ENCODE measurements at regions of chr1 and their contacts with region 1.

Region 1: DNA sequence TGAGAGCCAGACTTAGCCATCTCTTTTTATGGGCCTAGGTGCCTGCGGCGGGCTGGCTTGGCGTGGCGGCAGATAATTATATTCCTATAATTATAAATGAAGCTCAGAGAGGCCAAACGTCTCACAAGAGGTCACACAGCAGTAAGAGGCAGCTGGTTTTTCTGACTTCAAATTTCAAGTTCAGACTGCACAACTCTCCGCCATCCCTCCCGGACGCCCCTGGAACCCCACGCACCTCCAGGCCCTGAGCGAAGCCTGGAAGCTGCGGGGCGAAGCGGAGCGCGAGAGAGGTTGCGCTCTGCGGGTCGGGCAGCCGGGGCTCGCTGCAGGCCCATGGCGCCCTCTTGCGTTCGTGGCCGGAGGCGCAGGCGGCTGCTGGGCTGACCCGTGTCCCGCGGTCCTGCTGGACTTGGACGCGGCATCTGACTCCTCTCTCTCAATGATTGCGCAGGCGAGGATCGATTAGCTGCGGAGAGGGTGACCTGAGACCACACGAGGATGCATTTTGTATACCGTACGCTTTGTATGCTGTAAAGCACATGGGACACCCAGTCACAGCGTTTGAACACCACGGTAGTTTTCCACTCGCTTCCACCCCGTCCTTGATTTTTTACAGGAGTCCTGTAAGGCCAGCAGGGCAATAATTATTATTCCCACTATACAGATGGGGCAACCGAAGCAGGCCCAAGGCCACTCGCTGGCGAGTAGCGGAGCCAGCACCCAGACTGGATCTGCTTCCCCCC is 272.7 kb downstream of the FOXD2 start:
- DNase-seq: peak; percentile 64 to 88 (median 75)
- ATAC-seq: peak; percentile 79 to 93 (median 87)
- H3K4me3 ChIP-seq: peak overlapping the region in 10 of 12 donors; percentile 27 to 56 (median 46)
- H3K27ac ChIP-seq: no peak overlapping the region
- H3K4me1 ChIP-seq: peaks cover 7 to 32% (median 22%) of the 10 kb centered on the region in 12 donors
- H3K27me3 ChIP-seq: peaks cover 19 to 97% (median 74%) of the 10 kb centered on the region in 9 donors
- CTCF ChIP-seq: peak; percentile 96 to 100 (median 99)
- POLR2A ChIP-seq: no peak

Region 2: DNA sequence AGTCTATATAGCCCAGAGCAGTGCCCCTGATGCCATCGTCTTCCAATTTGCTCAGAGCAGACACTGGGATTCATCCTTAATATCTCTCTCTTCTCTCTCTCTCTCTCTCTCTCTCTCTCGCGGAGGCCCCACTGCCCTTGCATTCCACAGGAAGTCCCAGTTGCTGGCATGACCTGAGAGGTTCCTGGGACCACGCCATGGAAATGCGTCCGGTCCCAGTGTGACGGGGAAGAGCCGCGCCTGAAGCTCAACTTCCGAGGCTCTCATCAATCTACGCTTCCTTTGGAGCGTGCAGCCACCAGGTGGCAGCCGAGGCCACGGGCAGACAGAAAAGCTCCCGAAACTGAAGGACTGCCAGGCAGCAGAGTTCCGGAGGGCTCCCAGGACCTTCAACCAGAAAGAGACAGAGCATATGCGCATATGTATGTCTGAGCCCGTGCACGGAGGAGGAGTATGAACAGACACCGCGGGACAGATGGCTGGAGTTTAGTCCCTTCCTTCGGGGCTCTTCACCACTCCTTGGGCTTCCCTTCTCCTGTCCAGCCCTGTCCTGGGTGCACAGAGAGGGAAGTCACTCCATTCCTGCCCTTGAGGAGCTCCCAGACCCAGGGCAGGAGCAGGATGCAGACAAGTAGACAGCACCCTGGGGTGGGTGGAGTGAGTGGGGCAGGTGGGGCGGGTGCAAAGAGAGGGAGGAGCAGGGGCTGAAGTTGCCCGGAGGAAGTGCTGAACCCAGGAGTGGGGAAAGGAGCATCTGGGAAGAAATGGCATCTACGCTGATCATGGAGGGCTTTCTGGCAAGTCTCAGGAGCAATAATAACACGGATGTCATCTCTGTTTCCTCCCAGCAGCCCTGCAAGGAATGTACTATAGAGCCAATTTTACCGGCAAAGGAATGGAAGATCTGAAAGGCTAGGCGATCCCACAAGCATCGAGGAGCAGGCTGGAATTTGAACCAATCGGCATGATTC is 531.2 kb before region 1 on chr1:
- intact Hi-C with region 1: loop called in 5 of 10 experiments (anchors 5 to 10 kb)
- DNase-seq: peak; percentile 85 to 94 (median 92)
- ATAC-seq: peak; percentile 83 to 94 (median 92)
- H3K4me3 ChIP-seq: peak overlapping the region; percentile 6 to 61 (median 45)
- H3K27ac ChIP-seq: no peak overlapping the region
- H3K4me1 ChIP-seq: peaks cover 3 to 16% (median 10%) of the 10 kb centered on the region in 12 donors
- H3K27me3 ChIP-seq: peaks cover 0 to 22% (median 5%) of the 10 kb centered on the region in 9 donors
- CTCF ChIP-seq: peak; percentile 85 to 96 (median 91)
- POLR2A ChIP-seq: peak in 1 of 2 donors; percentile 15

Region 3: GRCh38 chr1:47302472-47302871 is 408.0 kb before region 1 on chr1:
- intact Hi-C with region 1: no loop called
- DNase-seq: no peak
- ATAC-seq: no peak
- H3K4me3 ChIP-seq: no peak overlapping the region
- H3K27ac ChIP-seq: no peak overlapping the region
- H3K4me1 ChIP-seq: peaks cover 0 to 17% (median 8%) of the 10 kb centered on the region in 12 donors
- H3K27me3 ChIP-seq: no peaks in the 10 kb centered on the region
- CTCF ChIP-seq: no peak
- POLR2A ChIP-seq: no peak

Region 4: DNA sequence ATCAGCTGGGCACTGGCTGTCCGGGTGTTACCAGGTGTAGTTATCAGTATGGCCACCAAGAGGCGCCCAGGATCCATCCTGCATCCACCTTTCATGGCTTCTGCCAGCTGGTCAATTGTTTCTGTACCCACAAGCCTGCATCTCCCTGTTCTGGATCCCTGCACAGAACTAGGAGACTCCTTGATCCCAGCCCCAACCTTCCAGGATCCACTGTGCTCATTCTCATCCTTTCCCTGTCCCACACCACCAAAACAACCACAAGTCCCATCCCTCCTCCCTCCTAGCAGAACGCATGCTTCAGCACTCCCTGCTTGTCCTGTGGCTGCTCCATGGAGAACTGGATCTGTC is 321.6 kb before region 1 on chr1:
- intact Hi-C with region 1: loop called in 3 of 10 experiments (anchors 5 kb)
- DNase-seq: peak in 4 of 5 donors; percentile 30 to 60 (median 41)
- ATAC-seq: peak; percentile 21 to 77 (median 70)
- H3K4me3 ChIP-seq: no peak overlapping the region
- H3K27ac ChIP-seq: no peak overlapping the region
- H3K4me1 ChIP-seq: peaks cover 0 to 10% (median 0%) of the 10 kb centered on the region in 12 donors
- H3K27me3 ChIP-seq: peaks cover 0 to 11% (median 0%) of the 10 kb centered on the region in 9 donors
- CTCF ChIP-seq: peak; percentile 50 to 70 (median 62)
- POLR2A ChIP-seq: no peak

Region 5: GRCh38 chr1:47437447-47438164 is 272.9 kb before region 1 on chr1 and contains the start of gene FOXD2:
- intact Hi-C with region 1: loop called (anchors 1 to 5 kb)
- DNase-seq: peak; percentile 83 to 93 (median 85)
- ATAC-seq: peak; percentile 92 to 95 (median 95)
- H3K4me3 ChIP-seq: peak within 1 kb of the TSS; percentile 36 to 81 (median 70)
- H3K27ac ChIP-seq: peak within 1 kb of the TSS in 11 of 12 donors; percentile 49 to 90 (median 69)
- H3K4me1 ChIP-seq: peaks cover 4 to 56% (median 25%) of the 10 kb centered on the region in 12 donors
- H3K27me3 ChIP-seq: peaks cover 43 to 98% (median 84%) of the 10 kb centered on the region in 9 donors
- CTCF ChIP-seq: peak; percentile 92 to 100 (median 98)
- POLR2A ChIP-seq: peak in 1 of 2 donors; percentile 62
- total RNA-seq, gene FOXD2: 0.05 to 0.14 (median 0.12) TPM in 5 of 9 donors, not detected in the others

Region 6: DNA sequence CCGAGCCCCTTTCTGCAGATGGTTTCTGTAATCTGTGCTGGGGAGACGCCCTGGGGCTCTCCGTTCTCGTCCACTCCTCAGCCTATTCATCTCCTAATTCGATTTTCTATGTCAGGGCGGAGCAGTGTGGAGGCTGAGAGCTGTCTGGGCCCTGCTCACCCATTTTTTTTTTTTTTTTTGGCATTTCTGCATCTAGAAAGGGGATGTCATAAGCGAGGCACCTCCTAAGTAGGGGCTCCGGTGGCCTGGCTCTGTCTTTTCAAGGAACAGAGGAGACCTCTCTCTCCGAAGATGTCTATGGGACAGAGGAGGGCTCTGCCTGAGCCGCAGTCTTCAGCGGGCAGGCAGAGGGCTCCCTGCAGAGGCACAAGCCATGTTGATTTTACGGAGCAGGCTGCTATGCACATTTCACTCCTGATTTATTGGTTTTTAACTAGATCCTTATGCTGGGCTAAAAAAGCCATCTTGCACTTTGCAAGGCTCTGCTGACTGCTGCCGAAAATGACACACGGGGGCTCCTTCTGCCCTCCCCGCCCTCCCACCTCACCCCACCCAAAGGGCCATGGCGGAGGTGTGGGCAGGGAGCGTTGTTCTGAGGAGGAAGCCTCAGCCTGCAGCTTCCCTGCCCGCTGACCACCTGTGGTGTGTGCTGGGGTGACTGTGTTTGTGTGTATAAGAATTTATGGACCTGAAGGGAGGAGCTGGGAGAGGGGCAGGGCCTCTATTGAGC is 201.6 kb before region 1 on chr1:
- intact Hi-C with region 1: no loop called
- DNase-seq: no peak
- ATAC-seq: peak in 1 of 4 donors; percentile 23
- H3K4me3 ChIP-seq: peak overlapping the region; percentile 34 to 60 (median 50)
- H3K27ac ChIP-seq: peak overlapping the region in 1 of 12 donors; percentile 59
- H3K4me1 ChIP-seq: peaks cover 0 to 18% (median 9%) of the 10 kb centered on the region in 12 donors
- H3K27me3 ChIP-seq: peaks cover 11 to 81% (median 30%) of the 10 kb centered on the region in 9 donors
- CTCF ChIP-seq: no peak
- POLR2A ChIP-seq: no peak

Region 7: DNA sequence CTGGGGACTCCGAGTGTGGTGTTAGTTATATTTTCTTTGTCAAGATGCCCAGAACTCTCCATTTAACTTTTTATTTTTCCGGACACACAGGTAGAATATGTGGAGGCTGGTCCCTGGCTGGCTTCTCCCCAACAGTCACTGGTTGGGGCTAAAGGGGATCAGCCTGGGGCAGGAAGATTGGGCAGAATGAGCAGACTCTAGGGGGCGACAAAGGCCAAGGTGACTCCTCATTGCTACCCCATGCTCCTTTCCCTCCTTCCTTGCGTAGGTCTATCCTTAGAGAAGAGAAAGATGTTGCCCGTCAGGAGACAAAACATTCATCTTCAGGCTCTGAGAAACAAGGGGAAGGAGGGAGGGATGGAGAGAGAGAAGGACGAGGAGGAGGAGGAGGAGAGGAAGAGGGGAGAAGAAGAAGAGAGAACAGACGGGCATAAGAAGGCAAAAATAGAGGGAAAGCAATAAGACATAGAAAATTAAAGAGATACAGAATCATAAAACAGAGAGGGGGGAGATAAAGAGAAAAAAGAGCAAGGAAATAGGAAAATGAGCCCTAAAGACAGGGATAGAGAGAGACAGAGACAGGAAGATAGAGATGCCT is 182.7 kb before region 1 on chr1:
- intact Hi-C with region 1: loop called in 9 of 10 experiments (anchors 1 to 10 kb)
- DNase-seq: no peak
- ATAC-seq: no peak
- H3K4me3 ChIP-seq: no peak overlapping the region
- H3K27ac ChIP-seq: no peak overlapping the region
- H3K4me1 ChIP-seq: peaks cover 0 to 6% (median 0%) of the 10 kb centered on the region in 12 donors
- H3K27me3 ChIP-seq: peaks cover 0 to 14% (median 4%) of the 10 kb centered on the region in 9 donors
- CTCF ChIP-seq: peak in 11 of 12 donors; percentile 23 to 54 (median 41)
- POLR2A ChIP-seq: no peak